ENCODE measurements at regions of chr1 and their contacts with region 1.

Region 1: DNA sequence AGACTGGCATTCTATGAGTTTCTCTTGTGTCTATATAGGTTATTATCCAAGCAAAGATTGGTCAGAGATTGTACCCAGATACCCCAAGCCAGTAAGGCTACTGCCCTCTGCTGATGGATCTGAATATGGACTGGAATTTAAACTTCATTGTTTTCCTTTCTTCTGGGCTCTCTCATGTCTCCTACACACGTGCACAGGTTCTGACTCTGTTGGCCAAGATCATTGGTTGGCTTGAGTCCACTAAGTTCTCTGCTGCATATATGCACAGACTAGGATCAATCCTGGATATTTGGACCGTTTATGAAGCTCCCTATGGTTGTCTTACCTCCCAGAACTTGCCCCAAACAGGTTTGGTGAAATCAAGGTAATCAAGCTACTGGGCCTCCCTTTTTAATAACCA is 69.7 kb downstream of the CC2D1B start:
- DNase-seq: peak; percentile 35
- ATAC-seq: peak; percentile 91
- H3K4me3 ChIP-seq: no peak overlapping the region
- H3K27ac ChIP-seq: no peak overlapping the region
- H3K4me1 ChIP-seq: no peaks in the 10 kb centered on the region
- H3K27me3 ChIP-seq: no peaks in the 10 kb centered on the region
- CTCF ChIP-seq: peak; percentile 82

Region 2: GRCh38 chr1:51445351-51446090 is 850.8 kb before region 1 on chr1:
- CTCF ChIA-PET with region 1: no interaction called
- POLR2A ChIA-PET with region 1: no interaction called
- in situ Hi-C with region 1: no loop called
- intact Hi-C with region 1: no loop called
- DNase-seq: no peak
- ATAC-seq: no peak
- H3K4me3 ChIP-seq: no peak overlapping the region
- H3K27ac ChIP-seq: no peak overlapping the region
- H3K4me1 ChIP-seq: no peaks in the 10 kb centered on the region
- H3K27me3 ChIP-seq: no peaks in the 10 kb centered on the region
- CTCF ChIP-seq: no peak

Region 3: GRCh38 chr1:51897699-51898031 is 398.7 kb before region 1 on chr1:
- CTCF ChIA-PET with region 1: interaction called, 13 read pairs
- POLR2A ChIA-PET with region 1: no interaction called
- in situ Hi-C with region 1: no loop called
- intact Hi-C with region 1: no loop called
- DNase-seq: peak; percentile 78
- ATAC-seq: peak; percentile 69
- H3K4me3 ChIP-seq: no peak overlapping the region
- H3K27ac ChIP-seq: no peak overlapping the region
- H3K4me1 ChIP-seq: peaks cover 3% of the 10 kb centered on the region; the same call in 1 of the 2 replicates
- H3K27me3 ChIP-seq: no peaks in the 10 kb centered on the region
- CTCF ChIP-seq: no peak

Region 4: DNA sequence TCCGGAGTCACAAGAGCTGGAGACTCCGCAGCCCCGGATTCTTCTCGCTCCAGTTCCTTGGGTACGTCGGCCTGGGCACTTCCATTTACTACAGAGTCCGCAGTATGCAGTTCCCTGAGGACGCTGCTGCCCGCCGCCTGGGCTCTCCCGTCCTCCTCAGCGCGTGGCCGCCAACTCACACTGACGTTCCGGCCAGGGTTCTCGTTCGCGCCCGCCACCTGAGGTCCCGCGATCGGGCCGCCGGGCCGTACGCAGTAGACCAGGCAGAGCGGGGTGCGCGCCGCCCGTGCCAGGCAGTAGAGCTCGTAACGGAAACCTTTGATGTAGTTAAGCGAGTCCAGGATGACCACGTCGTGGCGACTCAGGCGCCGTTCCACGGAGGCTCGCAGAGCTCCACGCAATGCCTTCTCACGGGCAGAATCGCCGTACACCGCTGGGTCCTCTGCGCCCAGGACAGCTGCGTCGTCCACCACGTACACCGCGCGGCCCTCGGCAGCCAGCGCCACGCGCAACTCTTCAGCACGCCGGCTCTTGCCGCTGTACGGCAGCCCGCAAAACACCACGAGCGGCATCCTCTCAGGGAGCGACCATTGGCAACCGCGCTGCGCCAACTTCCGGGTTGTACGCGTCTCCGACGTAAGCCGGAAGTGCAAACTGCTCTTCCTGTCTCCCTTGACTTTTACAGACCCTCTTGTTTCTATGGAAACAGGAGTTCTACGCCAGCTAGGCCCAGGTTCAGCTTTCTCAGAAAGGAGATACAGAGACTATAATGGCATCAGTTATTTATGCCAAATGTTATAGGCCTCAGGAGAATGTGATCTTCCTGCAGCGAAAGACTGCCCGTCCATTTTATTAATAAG is 262.9 kb before region 1 on chr1 and contains the start of gene KTI12:
- CTCF ChIA-PET with region 1: no interaction called
- POLR2A ChIA-PET with region 1: interaction called, 10 read pairs
- in situ Hi-C with region 1: no loop called
- intact Hi-C with region 1: no loop called
- DNase-seq: peak; percentile 73
- ATAC-seq: peak; percentile 95
- H3K4me3 ChIP-seq: peak within 1 kb of the TSS; percentile 73 to 92
- H3K27ac ChIP-seq: peak within 1 kb of the TSS; percentile 87
- H3K4me1 ChIP-seq: peaks cover 12% of the 10 kb centered on the region
- H3K27me3 ChIP-seq: no peaks in the 10 kb centered on the region
- CTCF ChIP-seq: no peak
- total RNA-seq, gene KTI12: 13.1 TPM

Region 5: DNA sequence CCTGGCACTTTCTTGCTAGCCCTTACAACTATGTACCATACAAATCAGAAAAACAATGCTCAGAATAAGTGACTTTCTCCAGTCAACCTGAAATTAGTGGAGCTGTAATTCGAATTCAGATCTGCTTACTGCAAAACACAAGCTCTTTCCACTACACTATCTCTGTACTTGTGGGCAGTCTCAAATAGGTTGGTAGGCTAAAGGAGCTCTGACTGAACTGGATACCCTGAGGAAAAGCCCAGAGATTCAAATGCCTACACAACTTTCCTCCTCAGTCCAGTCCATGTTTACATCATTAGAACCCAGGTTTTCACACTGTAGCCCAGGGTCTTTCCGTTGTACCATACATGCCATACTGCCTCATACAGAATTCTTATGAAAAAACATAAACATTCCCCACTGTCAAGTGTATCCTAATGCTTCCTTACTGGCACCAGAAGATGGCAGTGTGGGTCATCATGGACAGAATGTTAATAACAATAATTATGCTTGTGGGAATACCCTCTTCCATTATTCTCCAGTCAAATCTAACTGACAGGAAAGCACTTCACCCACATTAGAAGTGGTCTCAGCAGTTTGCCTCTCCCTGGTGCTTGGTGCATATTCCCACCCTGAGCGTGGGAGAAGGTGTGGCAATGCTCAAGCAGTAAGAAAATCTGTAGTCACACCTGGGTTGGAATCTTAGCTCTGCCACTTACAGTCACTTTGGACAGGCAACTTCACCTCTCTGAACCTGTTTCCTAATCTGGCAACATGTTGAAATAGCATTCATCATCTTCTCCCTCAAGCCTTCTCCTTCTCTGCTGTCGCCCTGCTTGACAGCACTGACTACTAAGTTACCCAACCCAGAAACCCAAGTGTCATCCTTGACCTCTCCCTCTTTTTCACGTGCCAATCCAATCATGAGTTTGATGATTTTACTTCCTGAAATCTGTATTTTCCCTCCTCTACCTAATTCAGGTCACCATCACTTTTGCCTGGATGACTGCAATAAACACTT is 168.9 kb before region 1 on chr1:
- CTCF ChIA-PET with region 1: interaction called, 3 read pairs
- POLR2A ChIA-PET with region 1: no interaction called
- in situ Hi-C with region 1: no loop called
- intact Hi-C with region 1: loop called (anchors 1 kb)
- DNase-seq: peak; percentile 52
- ATAC-seq: peak; percentile 97
- H3K4me3 ChIP-seq: no peak overlapping the region
- H3K27ac ChIP-seq: no peak overlapping the region
- H3K4me1 ChIP-seq: no peaks in the 10 kb centered on the region
- H3K27me3 ChIP-seq: peaks cover 20% of the 10 kb centered on the region
- CTCF ChIP-seq: peak; percentile 84

Region 6: GRCh38 chr1:52141513-52142219 is 154.7 kb before region 1 on chr1 and contains the start of gene ZFYVE9:
- CTCF ChIA-PET with region 1: interaction called, 3 read pairs
- POLR2A ChIA-PET with region 1: no interaction called
- in situ Hi-C with region 1: no loop called
- intact Hi-C with region 1: loop called (anchors 5 kb)
- DNase-seq: no peak
- ATAC-seq: peak; percentile 94
- H3K4me3 ChIP-seq: peak within 1 kb of the TSS; percentile 75 to 90
- H3K27ac ChIP-seq: peak within 1 kb of the TSS; percentile 78
- H3K4me1 ChIP-seq: peaks cover 25% of the 10 kb centered on the region
- H3K27me3 ChIP-seq: no peaks in the 10 kb centered on the region
- CTCF ChIP-seq: peak; percentile 96
- total RNA-seq, gene ZFYVE9: 18.0 TPM